ENCODE measurements at regions of chr12 and their contacts with region 1.

Region 1: GRCh38 chr12:19186722-19187661 is 57.5 kb downstream of the PLEKHA5 start:
- DNase-seq: no peak
- H3K4me3 Mint-ChIP-seq: no peak overlapping the region
- H3K27ac Mint-ChIP-seq: no peak overlapping the region
- H3K4me1 Mint-ChIP-seq: peaks cover 6% of the 10 kb centered on the region
- H3K27me3 Mint-ChIP-seq: no peaks in the 10 kb centered on the region

Region 2: DNA sequence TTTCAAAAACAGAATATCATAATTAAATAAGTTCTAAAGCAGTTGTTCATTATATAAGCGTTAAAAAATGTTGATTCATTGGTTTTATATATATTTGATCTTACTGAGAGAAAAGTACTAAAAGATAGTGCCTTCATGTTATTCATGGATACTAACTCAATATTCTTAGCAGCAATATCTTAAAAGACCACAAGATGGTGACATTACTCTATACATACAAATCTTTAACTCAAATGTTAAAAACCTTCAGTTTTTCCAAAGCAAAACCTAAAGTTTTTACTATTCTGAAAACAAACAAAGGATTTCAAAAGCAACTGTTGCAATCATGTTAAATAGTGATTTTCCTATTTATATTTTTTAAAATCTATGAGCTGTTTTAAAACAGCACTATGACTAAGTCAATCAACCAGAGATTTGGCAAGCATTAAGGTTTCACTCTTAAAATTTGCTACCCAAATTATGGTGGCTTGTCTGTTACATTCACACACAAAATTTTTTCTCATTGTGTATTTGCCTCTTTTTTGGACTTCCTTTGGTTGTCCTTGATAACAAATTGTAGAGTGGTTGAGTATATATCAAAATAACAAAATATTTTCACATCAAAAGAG is 1046.9 kb before region 1 on chr12:
- CTCF ChIA-PET with region 1: interaction called, 3 read pairs
- POLR2A ChIA-PET with region 1: no interaction called
- intact Hi-C with region 1: loop called (anchors 10 kb)
- DNase-seq: no peak
- H3K4me3 Mint-ChIP-seq: no peak overlapping the region
- H3K27ac Mint-ChIP-seq: no peak overlapping the region
- H3K4me1 Mint-ChIP-seq: no peaks in the 10 kb centered on the region
- H3K27me3 Mint-ChIP-seq: peaks cover 2% of the 10 kb centered on the region

Region 3: DNA sequence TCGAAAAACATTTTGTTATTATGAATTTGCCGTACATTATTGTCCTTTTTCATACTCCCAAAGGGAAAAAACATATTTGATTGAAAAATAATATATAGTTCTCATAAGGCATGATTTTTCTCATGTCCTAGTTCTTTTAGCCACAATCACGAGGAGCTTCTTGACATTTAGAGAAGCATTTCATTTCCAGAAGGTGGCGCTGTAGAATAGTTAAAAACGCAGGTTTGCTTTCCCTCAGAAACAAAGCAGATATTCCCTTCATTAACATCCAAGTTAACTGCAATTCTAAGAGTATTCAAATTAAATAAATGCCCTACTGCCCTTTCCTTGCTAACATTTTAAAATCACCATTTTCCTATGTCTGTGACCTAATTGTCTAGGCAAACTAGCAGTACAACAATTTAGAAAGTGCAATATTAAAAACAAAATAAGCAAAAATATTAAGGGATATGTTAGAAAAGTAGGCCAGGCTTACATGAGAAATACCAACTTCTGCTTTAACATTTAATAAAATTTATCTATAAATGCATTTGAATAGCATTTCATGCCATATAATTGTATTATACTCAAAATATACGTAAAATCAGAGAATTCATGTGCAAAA is 936.6 kb before region 1 on chr12:
- CTCF ChIA-PET with region 1: interaction called, 5 read pairs
- POLR2A ChIA-PET with region 1: no interaction called
- intact Hi-C with region 1: loop called (anchors 1 kb)
- DNase-seq: no peak
- H3K4me3 Mint-ChIP-seq: no peak overlapping the region
- H3K27ac Mint-ChIP-seq: no peak overlapping the region
- H3K4me1 Mint-ChIP-seq: no peaks in the 10 kb centered on the region
- H3K27me3 Mint-ChIP-seq: no peaks in the 10 kb centered on the region

Region 4: DNA sequence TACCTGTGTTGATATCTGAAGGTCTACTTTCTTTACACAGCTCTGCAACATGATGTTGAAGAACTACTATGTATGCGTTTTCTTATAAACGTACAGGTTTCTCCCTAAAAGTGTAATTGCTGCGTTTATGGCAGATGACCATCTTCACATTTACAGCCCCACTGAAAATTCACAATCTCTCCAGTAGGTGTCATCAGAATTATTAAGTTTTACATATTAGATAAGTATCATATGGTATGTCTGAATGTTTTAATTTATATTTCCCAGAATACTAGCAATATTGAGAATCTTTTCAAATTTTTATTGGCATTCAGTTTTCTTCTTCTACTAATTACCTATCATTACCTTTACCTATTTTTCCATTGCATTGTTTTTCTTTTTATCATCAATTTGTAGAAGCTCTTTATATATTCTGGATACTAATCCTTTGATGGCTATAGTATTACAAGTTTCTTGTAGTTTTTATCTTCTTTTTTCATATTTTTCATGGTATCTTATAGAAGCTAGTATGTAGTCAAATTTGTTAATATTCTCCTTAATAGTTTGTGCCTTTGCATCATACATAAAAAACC is 325.6 kb before region 1 on chr12:
- CTCF ChIA-PET with region 1: interaction called, 29 read pairs
- POLR2A ChIA-PET with region 1: no interaction called
- intact Hi-C with region 1: loop called (anchors 1 kb)
- DNase-seq: no peak
- H3K4me3 Mint-ChIP-seq: no peak overlapping the region
- H3K27ac Mint-ChIP-seq: no peak overlapping the region
- H3K4me1 Mint-ChIP-seq: no peaks in the 10 kb centered on the region
- H3K27me3 Mint-ChIP-seq: peaks cover 7% of the 10 kb centered on the region

Region 5: GRCh38 chr12:19196959-19197630 is 10.1 kb after region 1 on chr12:
- CTCF ChIA-PET with region 1: interaction called, 11 read pairs
- POLR2A ChIA-PET with region 1: no interaction called
- intact Hi-C with region 1: no loop called
- DNase-seq: no peak
- H3K4me3 Mint-ChIP-seq: no peak overlapping the region
- H3K27ac Mint-ChIP-seq: no peak overlapping the region
- H3K4me1 Mint-ChIP-seq: no peaks in the 10 kb centered on the region
- H3K27me3 Mint-ChIP-seq: no peaks in the 10 kb centered on the region

Region 6: GRCh38 chr12:19273482-19274330 is 86.7 kb after region 1 on chr12:
- CTCF ChIA-PET with region 1: no interaction called
- POLR2A ChIA-PET with region 1: no interaction called
- intact Hi-C with region 1: no loop called
- DNase-seq: peak; percentile 69
- H3K4me3 Mint-ChIP-seq: no peak overlapping the region
- H3K27ac Mint-ChIP-seq: peak overlapping the region; percentile 51
- H3K4me1 Mint-ChIP-seq: peaks cover 22% of the 10 kb centered on the region
- H3K27me3 Mint-ChIP-seq: no peaks in the 10 kb centered on the region

Measured in activated CD4-positive, alpha-beta memory T cell treated with anti-CD3 and anti-CD28 coated beads for 36 hours (primary cell).